ENCODE measurements at regions of chr11 and their contacts with region 1.

Region 1: DNA sequence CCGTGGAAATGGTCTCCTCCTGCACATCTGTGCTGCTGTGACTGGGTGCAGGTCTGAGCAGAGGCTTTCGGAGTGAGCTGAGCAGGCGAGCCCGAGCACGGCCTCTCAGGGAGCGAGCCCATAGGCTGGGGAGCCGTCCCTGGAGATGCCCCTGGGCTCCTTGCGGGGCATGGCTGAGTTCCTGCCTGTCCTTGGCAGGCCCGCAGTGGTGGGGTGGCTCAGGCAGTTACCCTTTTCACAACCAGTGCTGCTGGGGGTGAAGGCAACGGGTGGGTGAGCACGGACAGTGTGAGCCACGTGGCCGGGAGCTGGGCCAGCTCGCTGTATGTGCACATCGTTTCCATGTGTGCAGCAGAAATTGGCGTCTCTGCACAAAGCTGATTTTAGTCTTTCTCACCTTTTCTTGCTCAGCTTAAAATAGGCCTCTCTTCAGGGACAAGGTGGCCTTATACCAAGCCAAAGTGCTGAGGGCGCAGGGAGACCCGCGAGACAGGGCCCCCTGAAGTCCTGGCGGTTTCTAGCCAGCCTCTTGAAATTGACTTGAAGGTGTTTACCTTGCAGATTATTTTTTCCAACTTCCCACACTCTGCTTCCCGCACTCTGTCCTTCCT is at the start of gene TP53AIP1:
- DNase-seq: no peak
- ATAC-seq: no peak
- H3K4me3 ChIP-seq: no peak within 1 kb of the TSS
- H3K4me3 Mint-ChIP-seq: no peak within 1 kb of the TSS
- H3K27ac ChIP-seq: no peak within 1 kb of the TSS
- H3K27ac Mint-ChIP-seq: no peak within 1 kb of the TSS
- H3K4me1 ChIP-seq: no peaks in the 10 kb centered on the region
- H3K4me1 Mint-ChIP-seq: no peaks in the 10 kb centered on the region
- H3K27me3 ChIP-seq: peaks cover 0 to 28% (median 5%) of the 10 kb centered on the region in 4 experiments
- H3K27me3 Mint-ChIP-seq: peaks cover 39% of the 10 kb centered on the region
- CTCF ChIP-seq: no peak
- total RNA-seq, gene TP53AIP1: 0.12 TPM in 1 of 2 replicates, not detected in the other

Region 2: GRCh38 chr11:128956401-128957201 is 13.7 kb after region 1 on chr11:
- CTCF ChIA-PET with region 1: interaction called, 24 read pairs
- POLR2A ChIA-PET with region 1: no interaction called
- intact Hi-C with region 1: no loop called
- DNase-seq: peak; percentile 73
- ATAC-seq: no peak
- H3K4me3 ChIP-seq: no peak overlapping the region
- H3K4me3 Mint-ChIP-seq: no peak overlapping the region
- H3K27ac ChIP-seq: no peak overlapping the region
- H3K27ac Mint-ChIP-seq: no peak overlapping the region
- H3K4me1 ChIP-seq: peaks cover 0 to 4% of the 10 kb centered on the region in 2 donors
- H3K4me1 Mint-ChIP-seq: peaks cover 2% of the 10 kb centered on the region
- H3K27me3 ChIP-seq: peaks cover 0 to 13% (median 1%) of the 10 kb centered on the region in 4 experiments
- H3K27me3 Mint-ChIP-seq: peaks cover 30% of the 10 kb centered on the region
- CTCF ChIP-seq: peak; percentile 86

Measured in B cell (primary cell).